B cell (primary cell): ENCODE measurements at regions of chr2 and their contacts with region 1.

Region 1: GRCh38 chr2:460861-461260 is 173.0 kb upstream of the ALKAL2 start:
- DNase-seq: peak; percentile 86
- ATAC-seq: peak; percentile 81
- H3K4me3 ChIP-seq: peak overlapping the region in 3 of 5 experiments; percentile 3 to 34 (median 5)
- H3K4me3 Mint-ChIP-seq: peak overlapping the region; percentile 88
- H3K27ac ChIP-seq: peak overlapping the region; percentile 86 to 89
- H3K27ac Mint-ChIP-seq: peak overlapping the region; percentile 98
- H3K4me1 ChIP-seq: peaks cover 65 to 70% of the 10 kb centered on the region in 2 donors
- H3K4me1 Mint-ChIP-seq: peaks cover 79% of the 10 kb centered on the region
- H3K27me3 ChIP-seq: no peaks in the 10 kb centered on the region
- H3K27me3 Mint-ChIP-seq: no peaks in the 10 kb centered on the region
- CTCF ChIP-seq: no peak

Region 2: GRCh38 chr2:437762-438393 is 23.0 kb before region 1 on chr2:
- CTCF ChIA-PET with region 1: interaction called, 10 read pairs
- POLR2A ChIA-PET with region 1: no interaction called
- intact Hi-C with region 1: loop called (anchors 1 kb)
- DNase-seq: peak; percentile 90
- ATAC-seq: peak; percentile 98
- H3K4me3 ChIP-seq: peak overlapping the region; percentile 15 to 56 (median 25)
- H3K4me3 Mint-ChIP-seq: peak overlapping the region; percentile 79
- H3K27ac ChIP-seq: peak overlapping the region; percentile 87 to 90
- H3K27ac Mint-ChIP-seq: peak overlapping the region; percentile 88
- H3K4me1 ChIP-seq: peaks cover 44 to 58% of the 10 kb centered on the region in 2 donors
- H3K4me1 Mint-ChIP-seq: peaks cover 50% of the 10 kb centered on the region
- H3K27me3 ChIP-seq: no peaks in the 10 kb centered on the region
- H3K27me3 Mint-ChIP-seq: no peaks in the 10 kb centered on the region
- CTCF ChIP-seq: no peak

Region 3: DNA sequence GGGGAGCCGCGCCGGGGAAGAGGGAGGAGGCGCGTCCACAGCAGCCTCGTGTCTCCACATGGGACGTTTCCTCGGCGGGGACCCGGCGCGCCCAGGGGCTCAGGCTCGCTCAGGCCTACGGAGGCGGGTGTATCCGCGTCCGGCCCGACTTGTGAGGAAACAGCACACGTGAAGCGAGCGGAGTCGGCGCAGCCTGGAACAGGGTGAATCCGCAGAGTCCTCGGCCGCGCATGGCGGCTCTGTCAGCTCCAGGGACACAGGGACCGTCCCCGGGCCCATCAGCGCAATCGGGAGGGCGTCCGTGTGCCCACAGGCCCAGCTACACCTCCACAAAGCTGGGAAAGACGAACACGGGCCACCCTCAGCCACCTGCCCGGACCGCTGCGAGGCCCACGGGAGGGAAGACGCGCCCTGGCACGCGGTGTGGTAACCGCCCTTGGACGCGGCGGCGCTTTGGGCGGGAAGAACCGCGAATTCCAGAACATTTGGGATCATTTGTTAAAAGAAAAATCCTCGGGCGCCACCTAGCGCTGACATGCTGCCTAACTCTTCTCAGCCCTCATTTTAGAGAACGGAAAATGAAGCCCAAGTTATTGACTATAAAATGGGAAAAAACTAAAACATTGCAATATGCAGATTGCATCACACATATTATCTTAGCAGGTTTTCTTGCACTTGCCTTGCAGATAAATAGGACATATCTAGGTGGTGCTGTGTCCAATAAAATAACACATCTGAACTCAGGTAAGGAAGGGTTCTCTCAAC is 176.0 kb after region 1 on chr2:
- CTCF ChIA-PET with region 1: interaction called, 3 read pairs
- POLR2A ChIA-PET with region 1: no interaction called
- intact Hi-C with region 1: loop called (anchors 10 kb)
- DNase-seq: peak; percentile 72
- ATAC-seq: peak; percentile 70
- H3K4me3 ChIP-seq: peak overlapping the region in 4 of 5 experiments; percentile 49 to 65 (median 56)
- H3K4me3 Mint-ChIP-seq: peak overlapping the region; percentile 92
- H3K27ac ChIP-seq: peak overlapping the region in 1 of 2 donors; percentile 43
- H3K27ac Mint-ChIP-seq: peak overlapping the region; percentile 80
- H3K4me1 ChIP-seq: peaks cover 7 to 8% of the 10 kb centered on the region in 2 donors
- H3K4me1 Mint-ChIP-seq: peaks cover 6% of the 10 kb centered on the region
- H3K27me3 ChIP-seq: peaks cover 0 to 10% (median 0%) of the 10 kb centered on the region in 4 experiments
- H3K27me3 Mint-ChIP-seq: peaks cover 13% of the 10 kb centered on the region
- CTCF ChIP-seq: peak; percentile 99